ENCODE measurements at regions of chr2 and their contacts with region 1.

Region 1: GRCh38 chr2:174697255-174697654 is 67.0 kb downstream of the CHRNA1 start:
- DNase-seq: peak; percentile 30 to 74 (median 68)
- H3K4me3 ChIP-seq: peak overlapping the region in 1 of 59 donors; percentile 10
- H3K27ac ChIP-seq: peak overlapping the region in 1 of 59 donors; percentile 18
- H3K27me3 ChIP-seq: no peaks in the 10 kb centered on the region
- CTCF ChIP-seq: peak; percentile 38 to 85 (median 76)

Region 2: DNA sequence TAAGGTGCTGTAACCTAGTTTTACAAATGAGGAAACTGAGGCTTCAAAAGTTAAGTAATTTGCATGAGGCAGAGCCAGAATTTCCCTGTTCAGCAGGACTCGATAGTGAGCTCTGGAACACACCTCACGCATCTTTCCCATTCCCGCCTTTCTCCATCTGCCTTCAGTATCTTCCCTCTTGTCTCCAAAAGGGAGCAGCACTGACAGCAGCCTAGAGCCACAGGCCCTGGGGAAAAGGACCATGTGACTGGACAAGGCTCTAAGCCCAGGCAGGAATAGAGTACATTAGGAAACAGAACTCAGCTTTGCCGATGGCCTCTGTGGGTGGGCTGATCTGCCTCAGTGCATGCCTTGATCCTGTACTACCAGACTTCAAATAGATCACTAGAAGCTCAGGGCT is 231.9 kb before region 1 on chr2:
- intact Hi-C with region 1: loop called in 1 of 2 experiments (anchors 5 kb)
- DNase-seq: no peak
- H3K4me3 ChIP-seq: no peak overlapping the region
- H3K27ac ChIP-seq: no peak overlapping the region
- H3K27me3 ChIP-seq: no peaks in the 10 kb centered on the region
- CTCF ChIP-seq: peak in 4 of 56 donors; percentile 10 to 28 (median 16)

Region 3: DNA sequence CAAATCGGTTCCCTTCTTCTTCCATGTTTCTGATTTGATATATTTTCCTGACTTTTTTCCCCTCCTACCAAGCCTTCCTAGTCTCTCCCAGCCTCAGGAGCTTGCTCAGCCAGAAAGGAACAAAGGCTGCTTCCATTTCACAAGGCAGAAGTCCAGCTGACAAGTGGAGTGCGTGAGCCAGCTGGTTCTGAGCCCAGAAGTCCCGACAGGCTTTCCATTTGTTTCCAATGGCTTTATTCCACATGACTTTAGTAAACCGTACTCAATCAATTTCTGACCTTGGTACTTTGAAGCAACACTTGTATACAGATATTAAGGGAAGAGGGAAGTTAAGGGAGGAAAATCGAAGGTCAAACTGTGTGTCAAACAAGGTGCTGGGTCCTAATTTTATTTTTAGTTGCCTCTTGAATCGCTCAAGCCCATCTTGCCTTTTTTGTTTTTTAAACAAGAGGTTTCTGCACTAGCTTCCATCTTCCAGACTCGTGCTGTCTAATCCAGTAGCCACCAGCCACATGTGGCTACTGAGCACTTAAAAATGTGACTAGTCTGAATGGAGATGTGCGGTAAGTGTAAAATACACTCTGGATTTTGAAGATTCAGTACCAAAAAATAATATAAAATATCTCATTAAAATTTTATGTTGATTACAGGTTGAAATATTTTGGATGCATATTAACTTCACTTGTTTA is 135.8 kb before region 1 on chr2:
- intact Hi-C with region 1: loop called in 1 of 2 experiments (anchors 5 kb)
- DNase-seq: peak; percentile 64 to 92 (median 84)
- H3K4me3 ChIP-seq: peak overlapping the region in 20 of 59 donors; percentile 1 to 46 (median 16)
- H3K27ac ChIP-seq: peak overlapping the region in 54 of 59 donors; percentile 3 to 86 (median 74)
- H3K27me3 ChIP-seq: no peaks in the 10 kb centered on the region
- CTCF ChIP-seq: peak in 17 of 56 donors; percentile 7 to 47 (median 19)

Region 4: GRCh38 chr2:174985630-174986029 is 288.4 kb after region 1 on chr2:
- intact Hi-C with region 1: loop called (anchors 5 kb)
- DNase-seq: no peak
- H3K4me3 ChIP-seq: peak overlapping the region in 48 of 59 donors; percentile 2 to 62 (median 35)
- H3K27ac ChIP-seq: peak overlapping the region in 24 of 59 donors; percentile 2 to 73 (median 31)
- H3K27me3 ChIP-seq: no peaks in the 10 kb centered on the region
- CTCF ChIP-seq: peak; percentile 42 to 86 (median 73)

Region 5: DNA sequence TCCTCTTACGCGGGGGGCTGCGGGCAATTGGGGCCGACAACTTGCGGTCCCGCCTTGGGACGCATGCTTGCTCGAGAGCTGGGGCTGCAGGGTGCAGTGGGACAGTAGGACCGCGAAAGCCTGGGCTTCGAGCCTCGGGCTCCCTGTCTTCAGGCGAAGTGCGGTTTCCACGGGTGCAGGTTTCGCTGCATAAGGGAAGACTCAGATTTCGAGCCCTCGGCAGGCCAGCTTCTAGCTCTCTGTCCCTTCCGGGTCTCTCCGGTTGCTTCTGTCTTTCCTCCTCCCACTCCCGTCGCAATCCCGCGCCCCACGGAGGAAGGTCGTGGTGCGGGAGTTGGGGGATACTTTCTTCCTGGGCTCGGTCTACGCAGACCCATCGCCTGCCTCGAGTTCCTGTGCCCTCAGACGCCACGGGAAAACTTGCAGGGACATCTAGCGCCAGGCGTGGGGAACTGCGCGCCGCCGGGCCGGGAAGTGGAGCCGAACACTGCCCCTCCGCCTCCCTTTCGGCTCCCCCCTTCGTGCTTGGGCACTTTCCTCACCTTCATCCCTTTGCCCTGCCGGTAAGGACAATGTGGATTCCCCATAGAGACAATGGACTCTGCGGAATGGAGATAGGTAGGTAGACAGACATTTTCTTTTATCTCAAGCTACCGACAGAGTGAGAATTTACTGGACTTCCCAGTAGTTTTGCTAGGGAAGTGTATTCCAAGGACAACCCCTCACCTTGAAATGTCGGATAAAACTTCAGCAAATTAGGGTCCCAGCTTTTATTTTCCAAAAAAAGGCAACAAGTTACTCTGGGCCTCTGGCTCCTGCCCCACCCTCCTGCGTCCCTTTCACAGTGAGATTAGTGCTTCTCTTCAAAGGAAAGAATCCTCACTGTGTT is 1391.0 kb after region 1 on chr2:
- intact Hi-C with region 1: loop called in 1 of 2 experiments (anchors 10 kb)
- DNase-seq: peak in 4 of 10 donors; percentile 11 to 63 (median 26)
- H3K4me3 ChIP-seq: peak overlapping the region in 20 of 59 donors; percentile 11 to 56 (median 30)
- H3K27ac ChIP-seq: no peak overlapping the region
- H3K27me3 ChIP-seq: peaks cover 51 to 100% (median 100%) of the 10 kb centered on the region in 45 donors
- CTCF ChIP-seq: peak; percentile 19 to 79 (median 66)